Activated CD8-positive, alpha-beta T cell treated with anti-CD3 and anti-CD28 coated beads, Interleukin-2, amount 10 ng/mL, durations not matched to agents 7 days and 5 days (primary cell): ENCODE measurements at regions of chr4 and their contacts with region 1.

Region 1: DNA sequence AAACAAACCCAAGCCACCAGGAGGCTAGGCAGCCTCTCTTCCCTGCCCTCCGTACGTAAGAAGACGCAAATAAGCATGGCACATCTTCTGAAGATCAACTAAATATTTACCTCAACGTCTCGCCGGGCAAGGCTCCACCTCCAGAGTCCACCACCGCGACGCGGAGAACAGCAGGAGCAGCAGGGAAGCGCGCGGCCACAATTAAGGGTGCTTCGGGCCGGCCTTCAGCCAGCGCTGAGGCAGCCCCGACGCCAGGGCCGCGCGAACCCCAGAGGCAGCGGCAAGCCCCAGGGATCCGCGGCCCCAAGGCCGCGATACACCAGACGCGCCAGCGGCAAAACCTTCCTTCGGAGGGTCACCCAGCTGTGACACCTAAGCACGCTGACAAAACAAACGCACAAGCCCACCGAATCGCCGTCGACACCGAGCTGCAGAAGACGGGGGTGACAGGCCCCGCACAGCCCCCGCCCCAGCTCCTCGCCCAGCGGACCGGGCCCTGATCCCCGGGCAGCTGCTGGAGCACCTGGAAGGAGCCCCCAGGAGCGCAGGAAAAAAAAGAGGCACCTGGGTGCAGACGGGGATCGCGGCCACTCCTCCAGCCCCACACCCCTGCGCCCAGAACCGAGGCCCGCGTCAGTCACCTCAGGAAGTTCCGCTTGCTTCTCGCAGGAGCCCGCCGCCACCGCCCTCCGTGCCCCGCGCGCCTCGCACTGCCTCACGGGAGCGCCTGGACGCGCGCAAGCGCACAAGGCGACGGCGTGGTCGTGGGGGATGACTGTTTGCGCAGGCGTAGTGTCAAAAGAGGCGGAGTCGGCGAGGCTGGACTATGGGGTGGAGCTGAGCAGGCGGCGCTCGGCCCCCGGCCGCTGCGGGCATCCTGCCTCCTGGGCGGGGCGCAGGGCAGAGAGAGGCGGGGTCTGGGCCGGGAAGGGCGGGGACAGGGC is at the starts of genes HAUS3 and POLN:
- DNase-seq: peak; percentile 99
- ATAC-seq: peak; percentile 92
- H3K4me3 Mint-ChIP-seq: peak within 1 kb of the TSS; percentile 95
- H3K27ac Mint-ChIP-seq: peak within 1 kb of the TSS; percentile 93
- H3K4me1 Mint-ChIP-seq: peaks cover 60% of the 10 kb centered on the region
- H3K27me3 Mint-ChIP-seq: peaks cover 4% of the 10 kb centered on the region
- total RNA-seq, gene HAUS3: 22.0 to 25.8 TPM
- total RNA-seq, gene POLN: 2.4 to 2.5 TPM

Region 2: GRCh38 chr4:2135083-2135482 is 106.6 kb before region 1 on chr4:
- CTCF ChIA-PET with region 1: no interaction called
- POLR2A ChIA-PET with region 1: no interaction called
- DNase-seq: peak; percentile 69
- ATAC-seq: peak; percentile 89
- H3K4me3 Mint-ChIP-seq: peak overlapping the region; percentile 21
- H3K27ac Mint-ChIP-seq: peak overlapping the region; percentile 67
- H3K4me1 Mint-ChIP-seq: peaks cover 24% of the 10 kb centered on the region
- H3K27me3 Mint-ChIP-seq: no peaks in the 10 kb centered on the region

Region 3: DNA sequence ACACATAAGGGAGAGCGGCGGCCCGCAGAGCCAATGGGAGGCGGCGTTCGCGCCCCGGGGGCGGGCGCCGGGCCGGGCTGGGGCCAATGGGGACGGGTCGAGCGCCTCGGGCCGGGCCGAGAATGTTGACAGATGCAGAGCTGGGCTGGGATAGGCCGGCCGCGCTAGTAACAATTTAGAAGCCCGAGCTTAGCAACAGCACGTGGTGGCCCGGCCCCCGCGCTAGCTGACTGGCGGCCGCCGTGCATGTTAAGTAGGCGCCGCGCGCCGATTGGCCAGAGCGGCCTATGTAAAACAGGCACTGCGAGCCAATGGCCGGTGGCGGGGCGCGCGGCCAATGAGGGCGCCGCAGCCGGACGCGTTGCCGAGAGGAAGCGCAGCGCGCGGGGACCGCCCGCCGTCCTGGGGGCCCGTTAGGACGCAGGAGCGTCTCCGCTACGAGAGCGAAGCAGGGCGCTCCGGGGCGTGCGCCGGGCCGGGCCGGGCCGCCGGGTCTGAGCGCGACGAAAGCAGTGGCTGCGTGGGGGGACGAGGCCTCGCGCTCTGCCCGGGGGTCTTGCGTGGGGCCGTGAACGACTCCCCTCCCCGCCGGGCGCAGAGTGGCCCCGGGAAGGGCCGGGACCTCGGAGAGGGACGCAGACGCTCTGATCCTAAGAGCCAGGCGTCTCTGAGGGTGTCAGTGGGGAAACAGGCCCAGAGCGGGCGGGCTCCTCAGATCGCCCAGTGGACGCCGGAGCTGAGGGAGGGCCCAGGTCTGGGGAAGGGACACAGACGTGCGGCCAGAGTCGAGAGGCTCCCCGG is 20.7 kb after region 1 on chr4:
- CTCF ChIA-PET with region 1: interaction called, 7 read pairs
- POLR2A ChIA-PET with region 1: interaction called, 27 read pairs
- DNase-seq: peak; percentile 99
- ATAC-seq: peak; percentile 95
- H3K4me3 Mint-ChIP-seq: peak overlapping the region; percentile 69
- H3K27ac Mint-ChIP-seq: peak overlapping the region; percentile 83
- H3K4me1 Mint-ChIP-seq: no peaks in the 10 kb centered on the region
- H3K27me3 Mint-ChIP-seq: no peaks in the 10 kb centered on the region

Region 4: DNA sequence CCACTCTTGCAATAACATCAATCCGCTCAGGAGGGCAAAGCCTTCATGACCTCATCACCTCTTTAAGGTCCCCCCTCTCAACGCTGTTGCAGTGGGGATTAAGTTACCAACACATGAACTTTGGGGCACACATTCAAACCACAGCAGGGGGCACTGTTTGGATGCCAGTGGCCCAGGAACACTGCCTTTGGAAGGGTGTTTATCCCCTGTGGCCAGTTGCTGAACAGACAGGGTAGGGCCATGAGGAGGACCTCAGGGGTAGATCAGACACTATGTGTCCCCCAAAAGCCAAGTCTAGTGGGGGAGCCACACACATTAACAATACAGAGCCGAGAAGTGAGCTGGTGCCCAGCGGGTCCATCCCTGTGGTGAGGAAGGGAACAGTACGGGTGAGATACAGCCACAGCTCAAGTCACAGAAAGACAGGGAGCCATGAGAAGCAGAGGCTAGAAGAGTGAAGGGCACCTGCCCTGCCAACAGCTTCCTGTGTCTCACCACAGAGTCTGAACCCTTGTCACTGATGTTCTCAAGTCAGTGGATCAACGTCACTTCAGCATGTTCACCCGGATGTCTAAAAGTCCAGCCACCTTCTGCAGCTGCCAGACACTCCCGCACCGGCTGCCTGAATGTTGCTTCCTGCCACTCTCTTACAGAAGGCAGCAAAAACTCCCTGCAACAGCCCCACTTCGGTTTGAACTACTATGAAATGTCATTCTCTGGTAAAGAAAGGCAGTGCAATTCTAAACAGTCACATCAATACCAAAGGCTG is 40.1 kb after region 1 on chr4:
- CTCF ChIA-PET with region 1: interaction called, 7 read pairs
- POLR2A ChIA-PET with region 1: interaction called, 15 read pairs
- DNase-seq: peak; percentile 87
- ATAC-seq: peak; percentile 95
- H3K4me3 Mint-ChIP-seq: peak overlapping the region; percentile 45
- H3K27ac Mint-ChIP-seq: peak overlapping the region; percentile 95
- H3K4me1 Mint-ChIP-seq: peaks cover 42% of the 10 kb centered on the region
- H3K27me3 Mint-ChIP-seq: no peaks in the 10 kb centered on the region

Region 5: DNA sequence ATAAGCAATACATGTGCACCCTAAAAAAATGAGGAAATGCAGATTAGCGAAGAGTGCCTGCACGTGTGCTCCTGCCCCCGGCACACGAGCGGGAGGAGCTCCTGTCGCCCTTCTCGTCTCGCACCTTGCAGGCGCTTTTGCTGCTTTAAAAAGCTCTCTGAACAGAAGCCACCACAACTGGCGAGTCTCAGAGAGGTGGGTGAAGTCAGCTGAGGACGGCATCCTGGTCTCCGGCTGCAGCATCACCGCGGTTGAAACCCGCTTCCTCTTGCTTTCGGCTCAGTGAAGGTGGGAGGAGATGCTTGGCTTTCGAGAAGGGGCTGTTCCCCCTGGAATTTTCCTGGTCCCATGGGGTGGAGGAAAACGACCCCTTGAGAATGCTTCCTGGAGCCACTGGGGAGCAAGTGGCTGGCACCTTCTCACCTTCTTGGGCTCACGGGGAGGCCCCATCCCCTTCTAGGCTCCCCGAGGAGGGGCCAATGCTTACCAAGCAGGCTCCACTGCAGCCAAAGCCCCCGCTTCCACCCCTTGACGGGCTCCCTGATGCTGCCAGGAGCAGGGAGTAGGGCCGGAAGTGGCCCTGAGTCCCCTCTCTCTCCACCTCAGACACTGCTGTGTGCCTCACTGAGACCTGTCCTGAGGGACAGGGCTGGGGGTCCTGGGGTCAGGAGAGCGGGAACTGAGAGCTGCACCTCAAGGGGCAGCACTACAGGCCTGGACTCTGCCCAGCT is 49.5 kb after region 1 on chr4:
- CTCF ChIA-PET with region 1: interaction called, 3 read pairs
- POLR2A ChIA-PET with region 1: interaction called, 13 read pairs
- DNase-seq: peak; percentile 89
- ATAC-seq: peak; percentile 95
- H3K4me3 Mint-ChIP-seq: peak overlapping the region; percentile 38
- H3K27ac Mint-ChIP-seq: peak overlapping the region; percentile 86
- H3K4me1 Mint-ChIP-seq: peaks cover 52% of the 10 kb centered on the region
- H3K27me3 Mint-ChIP-seq: peaks cover 6% of the 10 kb centered on the region

Region 6: DNA sequence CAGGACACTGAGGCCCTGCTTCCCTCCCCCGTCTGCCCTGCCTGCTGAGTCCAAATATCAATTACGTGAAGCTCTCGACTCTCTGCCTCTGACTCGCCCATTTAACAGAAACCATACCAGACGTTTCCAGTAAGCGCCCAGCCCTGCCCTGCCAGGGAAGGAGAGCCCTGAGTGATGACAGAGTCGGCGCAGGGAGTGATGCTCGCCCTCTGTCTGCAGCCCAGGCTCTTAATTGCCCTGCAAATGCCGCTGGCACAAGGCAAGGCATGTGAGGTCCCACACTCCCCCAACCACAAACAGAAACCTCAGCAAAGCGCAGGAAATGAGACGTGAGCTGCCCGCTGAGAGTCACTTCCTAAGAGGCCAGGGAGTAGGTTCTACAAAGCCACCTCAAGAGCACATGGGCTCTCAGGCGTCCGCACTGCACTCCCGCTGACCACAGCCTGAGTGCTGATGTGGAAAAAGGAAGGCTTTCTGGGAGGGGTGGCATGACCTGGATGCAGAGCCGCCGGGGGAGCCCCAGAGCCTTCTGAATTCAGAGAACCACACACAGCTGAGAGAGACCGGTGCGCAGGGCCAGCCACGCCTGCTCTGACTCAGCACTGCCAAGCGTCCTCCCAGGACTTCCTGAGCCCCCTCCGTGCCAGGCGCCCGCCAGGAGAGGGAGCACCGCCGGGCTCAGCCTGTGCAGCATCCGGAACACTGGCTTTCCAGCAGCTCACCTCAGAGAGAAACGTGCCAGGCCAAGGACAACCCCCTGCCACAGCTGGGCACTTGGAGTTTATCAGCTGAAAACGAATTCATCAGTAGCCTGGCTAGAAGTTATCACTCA is 171.4 kb after region 1 on chr4:
- CTCF ChIA-PET with region 1: interaction called, 6 read pairs
- POLR2A ChIA-PET with region 1: interaction called, 12 read pairs
- DNase-seq: peak; percentile 95
- ATAC-seq: peak; percentile 87
- H3K4me3 Mint-ChIP-seq: peak overlapping the region; percentile 56
- H3K27ac Mint-ChIP-seq: peak overlapping the region; percentile 97
- H3K4me1 Mint-ChIP-seq: peaks cover 71% of the 10 kb centered on the region
- H3K27me3 Mint-ChIP-seq: peaks cover 29% of the 10 kb centered on the region